ENCODE measurements at regions of chr10 and their contacts with region 1.

Region 1: DNA sequence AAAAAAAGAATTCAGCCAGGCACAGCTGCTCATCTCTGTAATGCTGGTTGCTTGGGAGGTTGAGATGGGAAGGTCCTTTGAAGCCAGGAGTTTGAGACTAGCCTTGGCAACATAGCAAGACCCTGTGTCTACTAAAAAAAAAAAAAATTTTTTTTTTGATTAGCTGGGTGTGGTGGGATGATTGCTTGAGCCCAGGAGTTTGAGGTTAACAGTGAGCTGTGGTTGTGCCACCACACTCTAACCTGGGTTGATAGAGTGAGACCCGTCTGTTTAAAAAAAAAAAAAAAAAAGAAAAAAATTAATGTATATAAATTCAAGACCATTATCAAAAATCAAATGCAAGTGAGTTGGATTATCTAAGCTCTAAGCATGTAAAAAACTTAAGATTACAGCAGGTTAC is 5.7 kb downstream of the WAC start:
- DNase-seq: no peak
- ATAC-seq: no peak
- H3K4me3 ChIP-seq: no peak overlapping the region
- H3K27ac ChIP-seq: no peak overlapping the region
- H3K4me1 ChIP-seq: peaks cover 3 to 64% (median 51%) of the 10 kb centered on the region in 9 donors
- H3K27me3 ChIP-seq: no peaks in the 10 kb centered on the region
- CTCF ChIP-seq: no peak

Region 2: DNA sequence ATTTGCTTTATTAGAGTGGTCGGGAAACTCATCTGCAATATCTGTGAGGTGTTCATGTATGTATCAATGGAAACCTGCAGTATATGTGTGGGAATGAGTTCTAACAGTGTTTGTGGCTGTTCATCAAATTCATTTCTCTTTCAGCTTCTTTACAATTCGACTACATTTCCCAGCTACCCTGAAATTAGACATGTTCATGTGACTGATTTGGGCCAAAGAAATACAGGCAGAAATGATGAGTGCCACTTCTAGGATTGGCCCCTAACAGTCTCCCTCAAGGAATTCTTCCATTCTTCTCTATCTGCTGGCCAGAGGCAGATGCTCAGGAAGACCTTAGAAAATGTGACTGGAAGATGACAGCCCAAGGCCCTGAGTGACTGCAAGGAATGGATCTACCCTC is 120.5 kb before region 1 on chr10:
- intact Hi-C with region 1: no loop called
- DNase-seq: no peak
- ATAC-seq: no peak
- H3K4me3 ChIP-seq: no peak overlapping the region
- H3K27ac ChIP-seq: no peak overlapping the region
- H3K4me1 ChIP-seq: no peaks in the 10 kb centered on the region
- H3K27me3 ChIP-seq: peaks cover 0 to 3% (median 0%) of the 10 kb centered on the region in 7 donors
- CTCF ChIP-seq: no peak

Region 3: DNA sequence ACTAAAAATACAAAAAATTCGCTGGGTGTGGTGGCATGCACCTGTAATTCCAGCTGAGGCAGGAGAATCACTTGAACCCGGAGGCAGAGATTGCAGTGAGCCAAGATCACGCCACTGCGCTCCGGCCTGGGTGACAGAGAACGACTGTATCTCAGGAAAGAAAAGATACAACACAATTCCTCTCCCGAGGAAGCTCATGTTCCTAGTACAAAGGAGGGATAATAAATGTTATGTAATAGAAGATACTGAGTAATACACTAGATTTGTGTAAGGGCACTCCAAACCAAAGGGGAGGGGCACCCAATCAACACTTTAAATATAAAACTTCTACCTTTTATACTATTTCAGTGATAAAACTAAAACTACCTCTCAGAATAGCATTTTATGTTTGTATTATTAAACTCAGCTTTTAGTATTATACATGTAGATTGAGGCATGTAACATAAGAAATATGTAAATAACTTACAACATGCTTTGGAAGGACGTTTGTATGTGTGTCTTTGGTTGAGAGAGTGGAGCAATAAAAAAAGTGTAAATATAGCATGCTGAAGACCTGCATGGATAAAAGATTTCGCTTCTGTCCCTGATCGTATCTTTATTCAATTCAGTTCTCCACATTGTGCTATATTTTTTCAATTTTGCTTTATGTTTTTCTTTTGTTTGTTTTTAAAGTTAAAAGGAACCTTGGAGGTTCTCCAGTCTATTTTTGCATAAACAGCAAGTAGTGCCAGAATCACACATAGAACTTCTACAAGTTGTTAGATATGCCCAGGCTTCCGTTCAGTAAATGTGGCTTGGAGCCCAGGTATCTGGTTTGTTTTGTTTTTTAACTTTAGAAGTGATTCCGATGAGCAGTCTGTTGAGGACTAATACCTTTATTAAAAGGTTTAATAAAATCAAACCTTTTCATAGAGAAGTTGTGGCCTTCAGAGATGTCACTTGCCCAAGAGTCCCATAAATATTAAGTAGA is 66.3 kb after region 1 on chr10:
- intact Hi-C with region 1: loop called in 1 of 10 experiments (anchors 5 kb)
- DNase-seq: no peak
- ATAC-seq: peak in 7 of 8 donors; percentile 30 to 62 (median 44)
- H3K4me3 ChIP-seq: no peak overlapping the region
- H3K27ac ChIP-seq: peak overlapping the region in 3 of 10 donors; percentile 4 to 54 (median 30)
- H3K4me1 ChIP-seq: peaks cover 0 to 70% (median 43%) of the 10 kb centered on the region in 9 donors
- H3K27me3 ChIP-seq: no peaks in the 10 kb centered on the region
- CTCF ChIP-seq: no peak

Measured in heart right ventricle (tissue), 16 donors.